ENCODE measurements at regions of chr7 and their contacts with region 1.

Region 1: GRCh38 chr7:7653593-7654187 is 13.1 kb downstream of the UMAD1 start:
- DNase-seq: peak; percentile 18
- CTCF ChIP-seq: peak; percentile 29

Region 2: DNA sequence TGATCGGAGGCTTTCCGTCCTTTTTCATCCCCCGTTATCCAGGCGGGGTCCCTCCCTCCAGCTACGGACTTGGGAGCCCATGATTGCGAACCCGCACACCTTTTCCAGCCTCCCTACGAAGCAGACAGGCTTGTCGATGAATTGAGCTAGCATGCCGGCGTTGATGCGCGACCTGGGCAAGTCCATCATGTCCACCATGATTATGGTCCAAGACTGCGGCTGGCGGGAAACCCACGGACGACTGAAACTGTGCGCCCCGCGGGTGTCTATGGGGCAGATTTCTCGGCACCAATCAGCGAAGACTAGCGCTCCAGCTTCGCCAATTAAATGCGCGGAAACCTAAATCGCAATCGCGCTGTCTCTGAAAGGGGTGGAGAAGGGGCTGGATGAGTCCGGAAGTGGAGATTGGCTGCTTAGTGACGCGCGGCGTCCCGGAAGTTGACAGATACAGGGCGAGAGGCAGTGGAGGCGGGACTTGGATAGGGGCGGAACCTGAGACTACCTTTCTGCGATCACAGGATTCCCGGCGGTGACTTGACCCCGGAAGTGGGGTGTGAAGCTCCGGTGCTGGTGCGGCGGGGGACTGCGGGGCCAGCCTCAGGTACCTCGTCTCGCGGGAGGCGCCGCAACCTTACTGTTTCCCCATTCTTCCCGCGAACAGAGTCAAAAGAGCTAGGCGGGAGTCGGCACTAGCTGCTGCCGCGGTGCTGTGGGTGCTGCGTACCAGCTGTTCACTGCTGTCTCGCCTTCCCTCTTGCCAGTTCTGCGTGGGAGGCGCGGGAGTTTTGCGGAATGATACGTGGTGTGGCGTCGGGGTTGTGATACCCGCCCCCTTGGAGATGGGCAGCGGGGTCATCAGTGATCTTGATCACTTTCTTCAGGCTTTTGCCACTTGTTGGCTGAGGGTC is 13.2 kb before region 1 on chr7 and contains the start of gene UMAD1:
- CTCF ChIA-PET with region 1: interaction called, 19 read pairs
- POLR2A ChIA-PET with region 1: no interaction called
- DNase-seq: peak; percentile 94
- CTCF ChIP-seq: no peak

Measured in GM10248 (cell line).